GM12878 (cell line): ENCODE measurements at regions of chr12 and their contacts with region 1.

Region 1: DNA sequence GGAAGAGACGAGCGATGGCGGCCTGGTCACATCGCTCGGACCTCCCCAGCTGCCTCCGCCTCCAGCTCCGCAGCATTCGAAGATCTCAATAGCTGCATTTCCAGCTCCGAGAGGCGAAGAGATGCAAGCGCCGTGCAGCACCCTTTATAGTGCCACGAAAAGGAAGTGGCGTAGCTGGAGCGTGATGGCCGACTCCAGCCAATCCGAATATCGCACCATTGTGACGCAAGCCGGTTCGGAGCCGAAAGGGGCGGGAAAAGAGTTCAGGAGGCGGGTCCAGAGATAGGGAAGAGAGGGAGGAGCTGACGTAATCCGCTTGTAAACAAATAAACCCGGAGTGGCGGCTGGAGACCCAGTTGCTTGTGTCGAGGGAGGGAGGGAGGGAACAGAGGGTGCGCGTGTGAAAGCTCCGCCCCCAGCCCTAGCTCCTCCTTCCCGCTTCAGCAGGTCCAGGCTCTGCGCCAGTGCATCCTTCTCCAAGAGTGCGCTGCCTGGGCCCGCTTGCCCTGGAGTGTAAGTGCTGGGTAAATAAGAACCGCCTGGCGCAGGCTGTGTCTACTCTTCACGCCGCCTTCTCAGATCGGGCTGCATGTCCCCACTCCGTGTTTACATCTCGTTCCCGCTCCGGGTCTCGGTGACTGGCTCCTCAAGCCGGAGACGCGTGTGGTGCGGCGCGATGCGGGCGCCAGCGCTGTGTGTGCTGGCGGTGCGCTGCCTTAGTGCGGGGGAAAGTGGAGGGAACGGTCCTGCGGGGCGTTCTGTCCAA is at the start of gene BTG1:
- DNase-seq: peak; percentile 100
- ATAC-seq: peak; percentile 72
- H3K4me3 ChIP-seq: peak within 1 kb of the TSS; percentile 89
- H3K27ac ChIP-seq: peak within 1 kb of the TSS; percentile 94
- H3K4me1 ChIP-seq: peaks cover 8% of the 10 kb centered on the region
- H3K27me3 ChIP-seq: no peaks in the 10 kb centered on the region
- CTCF ChIP-seq: no peak
- EP300 ChIP-seq: no peak; a peak in 2 of 4 replicates
- POLR2A ChIP-seq: peak; percentile 97
- RAD21 ChIP-seq: 0 out of 2 replicates have a peak, but pooled peaks have one; percentile 5
- polyA plus RNA-seq, gene BTG1: 23.7 to 61.5 TPM

Region 2: GRCh38 chr12:91991399-91992187 is 154.3 kb before region 1 on chr12:
- CTCF ChIA-PET with region 1: interaction called, 4 read pairs
- POLR2A ChIA-PET with region 1: interaction called, 4 read pairs
- RAD21 ChIA-PET with region 1: interaction called, 7 read pairs
- SMC1A ChIA-PET with region 1: interaction called, 23 read pairs
- in situ Hi-C with region 1: no loop called
- intact Hi-C with region 1: no loop called
- DNase-seq: peak; percentile 32
- ATAC-seq: peak; percentile 94
- H3K4me3 ChIP-seq: no peak overlapping the region
- H3K27ac ChIP-seq: no peak overlapping the region
- H3K4me1 ChIP-seq: no peaks in the 10 kb centered on the region
- H3K27me3 ChIP-seq: no peaks in the 10 kb centered on the region
- CTCF ChIP-seq: peak in 2 of 3 experiments; percentile 35 to 56; a peak in 3 of 6 replicates
- EP300 ChIP-seq: no peak
- POLR2A ChIP-seq: no peak
- RAD21 ChIP-seq: peak; percentile 61

Region 3: DNA sequence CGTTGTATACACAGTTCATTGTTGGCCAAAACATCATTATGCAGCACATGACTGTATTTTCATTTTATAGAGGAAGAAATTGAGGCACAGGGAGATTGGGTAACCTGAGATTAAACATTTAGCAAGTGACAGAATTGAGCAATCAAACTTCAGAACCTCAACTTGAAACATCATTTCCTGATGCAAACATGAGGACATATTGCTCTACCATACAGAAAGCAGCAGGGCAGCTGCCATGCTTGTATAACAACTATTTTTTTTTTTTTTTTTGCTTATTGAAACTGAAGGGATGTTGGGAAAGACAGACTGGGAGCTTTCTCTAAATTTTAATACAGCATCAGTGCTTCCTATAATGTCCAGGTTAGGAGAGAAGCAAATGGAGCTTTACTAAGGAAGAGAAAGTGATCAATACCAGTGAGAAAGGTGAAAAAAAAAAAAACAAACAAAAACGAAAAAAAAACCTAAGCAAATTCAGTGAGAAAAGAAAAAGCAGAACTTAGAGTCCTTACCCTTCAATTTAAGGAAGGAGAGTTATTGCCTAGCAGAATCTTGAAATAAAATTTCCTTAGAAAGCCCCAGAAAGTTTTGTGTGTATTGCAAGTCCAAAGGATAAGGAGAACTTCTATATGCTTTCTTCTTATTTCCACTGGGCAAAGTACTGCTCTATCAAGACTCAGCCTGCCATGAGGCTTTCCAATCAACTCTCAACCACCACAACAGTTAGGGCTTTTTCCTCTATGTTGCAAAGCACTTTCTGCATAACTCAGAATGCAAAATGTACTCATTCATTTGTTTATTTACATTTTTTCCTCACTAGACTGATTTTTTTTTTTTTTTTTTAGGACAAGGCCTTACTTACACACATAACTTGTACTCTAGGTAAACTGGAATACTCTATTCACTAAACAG is 21.9 kb before region 1 on chr12:
- CTCF ChIA-PET with region 1: interaction called, 5 read pairs
- POLR2A ChIA-PET with region 1: interaction called, 4 read pairs
- RAD21 ChIA-PET with region 1: interaction called, 167 read pairs
- SMC1A ChIA-PET with region 1: interaction called, 4 read pairs
- in situ Hi-C with region 1: no loop called
- intact Hi-C with region 1: no loop called
- DNase-seq: no peak
- ATAC-seq: peak; percentile 49
- H3K4me3 ChIP-seq: peak overlapping the region; percentile 16; the same call in 1 of the 2 replicates
- H3K27ac ChIP-seq: peak overlapping the region; percentile 54
- H3K4me1 ChIP-seq: peaks cover 11% of the 10 kb centered on the region
- H3K27me3 ChIP-seq: no peaks in the 10 kb centered on the region
- CTCF ChIP-seq: no peak
- EP300 ChIP-seq: no peak
- POLR2A ChIP-seq: no peak
- RAD21 ChIP-seq: no peak

Region 4: GRCh38 chr12:92208613-92209121 is 62.8 kb after region 1 on chr12:
- CTCF ChIA-PET with region 1: interaction called, 3 read pairs
- POLR2A ChIA-PET with region 1: interaction called, 4 read pairs
- RAD21 ChIA-PET with region 1: interaction called, 25 read pairs
- SMC1A ChIA-PET with region 1: interaction called, 8 read pairs
- in situ Hi-C with region 1: no loop called
- intact Hi-C with region 1: no loop called
- DNase-seq: peak; percentile 71
- ATAC-seq: peak; percentile 86
- H3K4me3 ChIP-seq: peak overlapping the region; percentile 32; the same call in 1 of the 2 replicates
- H3K27ac ChIP-seq: peak overlapping the region; percentile 75
- H3K4me1 ChIP-seq: peaks cover 13% of the 10 kb centered on the region
- H3K27me3 ChIP-seq: no peaks in the 10 kb centered on the region
- CTCF ChIP-seq: no peak
- EP300 ChIP-seq: peak in 1 of 2 experiments; percentile 21; a peak in 1 of 4 replicates
- POLR2A ChIP-seq: no peak
- RAD21 ChIP-seq: no peak

Region 5: GRCh38 chr12:92445253-92446082 is 299.6 kb after region 1 on chr12:
- CTCF ChIA-PET with region 1: interaction called, 3 read pairs
- POLR2A ChIA-PET with region 1: interaction called, 11 read pairs
- RAD21 ChIA-PET with region 1: interaction called, 13 read pairs
- SMC1A ChIA-PET with region 1: interaction called, 9 read pairs
- in situ Hi-C with region 1: no loop called
- intact Hi-C with region 1: loop called (anchors 5 kb)
- DNase-seq: peak; percentile 97
- ATAC-seq: peak; percentile 90
- H3K4me3 ChIP-seq: peak overlapping the region; percentile 41
- H3K27ac ChIP-seq: peak overlapping the region; percentile 100
- H3K4me1 ChIP-seq: peaks cover 44% of the 10 kb centered on the region
- H3K27me3 ChIP-seq: no peaks in the 10 kb centered on the region
- CTCF ChIP-seq: no peak
- EP300 ChIP-seq: peak; percentile 89 to 91
- POLR2A ChIP-seq: peak; percentile 61
- RAD21 ChIP-seq: peak; percentile 32; the same call in 1 of the 2 replicates

Region 6: DNA sequence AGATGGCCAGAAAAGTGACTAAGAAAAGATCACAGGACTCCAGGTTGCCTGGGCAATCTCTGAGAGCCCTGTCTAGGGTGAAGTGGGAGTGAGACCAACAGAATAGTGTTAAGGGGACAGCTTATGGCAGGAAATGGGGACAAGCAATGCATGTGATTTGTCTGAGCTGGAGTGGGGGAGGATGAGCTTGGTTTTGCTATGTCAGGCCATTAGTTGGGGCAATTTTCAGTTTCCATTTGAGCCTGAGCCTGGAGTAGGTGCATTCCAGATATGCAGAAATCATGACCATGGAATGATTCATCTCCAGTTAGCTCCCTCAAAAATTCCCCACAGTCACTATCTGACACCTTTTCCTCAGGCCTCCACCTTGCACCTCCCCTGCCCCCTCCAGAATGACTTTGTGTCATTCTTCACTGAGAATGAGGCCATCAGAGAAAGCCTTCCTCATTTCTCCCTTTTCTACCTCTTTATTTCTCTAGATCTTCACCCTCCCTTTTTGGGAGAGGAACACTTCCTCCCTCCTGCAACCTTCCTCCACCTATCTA is 406.0 kb after region 1 on chr12:
- CTCF ChIA-PET with region 1: interaction called, 4 read pairs
- POLR2A ChIA-PET with region 1: interaction called, 13 read pairs
- RAD21 ChIA-PET with region 1: interaction called, 94 read pairs
- SMC1A ChIA-PET with region 1: no interaction called
- in situ Hi-C with region 1: no loop called
- intact Hi-C with region 1: no loop called
- DNase-seq: peak; percentile 98
- ATAC-seq: peak; percentile 75
- H3K4me3 ChIP-seq: peak overlapping the region; percentile 17; the same call in 1 of the 2 replicates
- H3K27ac ChIP-seq: peak overlapping the region; percentile 98
- H3K4me1 ChIP-seq: peaks cover 67% of the 10 kb centered on the region
- H3K27me3 ChIP-seq: no peaks in the 10 kb centered on the region
- CTCF ChIP-seq: no peak
- EP300 ChIP-seq: peak; percentile 92 to 97
- POLR2A ChIP-seq: peak; percentile 57
- RAD21 ChIP-seq: no peak

Region 7: DNA sequence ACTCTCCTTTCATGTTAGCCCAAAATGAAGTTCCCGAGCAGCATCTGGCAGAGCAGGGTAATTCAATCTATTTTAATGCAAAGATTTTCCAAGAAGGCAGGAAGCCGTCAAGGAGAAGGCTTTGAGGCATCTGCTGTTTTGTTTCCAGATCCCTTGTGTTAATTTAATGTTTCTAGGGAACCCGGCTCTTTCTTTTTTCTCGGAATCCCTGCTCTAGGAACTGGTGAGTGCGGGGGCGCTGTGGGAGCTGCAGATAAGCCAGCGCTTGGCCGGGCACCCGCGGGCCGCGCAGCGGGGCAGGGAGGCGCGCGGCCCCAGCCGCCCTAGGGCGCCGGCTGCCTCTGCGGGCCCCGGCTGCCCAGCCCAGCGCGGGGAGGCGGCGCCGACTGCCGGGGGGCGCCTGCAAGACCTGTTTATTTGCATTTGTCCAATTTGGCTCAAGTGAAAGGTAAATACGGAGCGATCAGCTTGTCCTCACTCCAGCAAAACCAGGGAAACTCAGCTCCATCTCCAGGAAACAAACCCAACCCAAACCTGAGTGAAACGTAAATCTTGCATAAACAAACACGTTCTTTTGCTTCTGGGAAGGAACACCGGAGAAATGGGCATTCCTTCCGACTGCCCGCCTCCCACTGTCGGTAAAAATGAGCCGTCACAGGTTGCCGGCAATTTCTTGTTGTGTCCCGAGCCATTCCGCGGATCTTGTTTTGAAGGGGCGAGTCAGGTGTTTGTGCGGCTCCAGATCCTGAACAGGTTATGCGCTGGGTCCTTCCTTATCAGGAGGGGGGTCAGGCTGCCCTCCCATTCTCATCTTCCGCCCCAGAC is 1596.4 kb after region 1 on chr12:
- CTCF ChIA-PET with region 1: no interaction called
- POLR2A ChIA-PET with region 1: no interaction called
- RAD21 ChIA-PET with region 1: no interaction called
- SMC1A ChIA-PET with region 1: no interaction called
- in situ Hi-C with region 1: no loop called
- intact Hi-C with region 1: no loop called
- DNase-seq: no peak
- ATAC-seq: peak; percentile 99
- H3K4me3 ChIP-seq: peak overlapping the region; percentile 67
- H3K27ac ChIP-seq: no peak overlapping the region
- H3K4me1 ChIP-seq: no peaks in the 10 kb centered on the region
- H3K27me3 ChIP-seq: no peaks in the 10 kb centered on the region
- CTCF ChIP-seq: peak; percentile 28 to 58 (median 37); a peak in 4 of 6 replicates
- EP300 ChIP-seq: no peak
- POLR2A ChIP-seq: peak; percentile 31; the same call in 1 of the 2 replicates
- RAD21 ChIP-seq: peak; percentile 84